Breast epithelium (tissue), 4 donors: ENCODE measurements at regions of chr16 and their contacts with region 1.

Region 1: DNA sequence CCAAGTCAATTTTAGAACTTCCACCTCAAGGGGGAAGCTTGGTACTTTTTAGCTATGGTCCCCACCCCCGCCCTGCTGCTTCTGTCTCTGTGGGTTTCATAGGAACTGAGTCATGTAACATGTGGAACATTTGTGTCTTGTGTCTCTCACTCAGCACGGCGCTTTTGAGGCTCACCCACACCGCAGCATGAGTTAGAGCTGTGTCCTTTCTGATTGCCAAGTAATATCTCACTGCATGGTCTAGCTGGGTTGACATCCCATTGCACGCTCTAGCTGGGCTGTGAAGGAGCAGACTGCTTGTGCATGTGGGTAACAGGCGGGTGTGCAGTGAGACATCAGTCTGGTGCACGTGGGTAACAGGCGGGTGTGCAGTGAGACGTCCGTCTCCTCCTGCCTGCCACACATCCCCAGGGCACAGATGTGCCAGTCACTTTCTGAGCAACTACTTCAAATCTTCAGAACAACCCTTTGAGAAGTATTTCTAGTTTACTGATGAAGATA is 26.4 kb upstream of the SLC7A5 start:
- DNase-seq: no peak
- H3K4me3 ChIP-seq: no peak overlapping the region
- H3K27ac ChIP-seq: no peak overlapping the region
- H3K4me1 ChIP-seq: no peaks in the 10 kb centered on the region
- H3K27me3 ChIP-seq: no peaks in the 10 kb centered on the region
- CTCF ChIP-seq: no peak
- POLR2A ChIP-seq: no peak

Region 2: GRCh38 chr16:86375364-86375763 is 1520.3 kb before region 1 on chr16:
- intact Hi-C with region 1: no loop called
- DNase-seq: no peak
- H3K4me3 ChIP-seq: no peak overlapping the region
- H3K27ac ChIP-seq: no peak overlapping the region
- H3K4me1 ChIP-seq: no peaks in the 10 kb centered on the region
- H3K27me3 ChIP-seq: peaks cover 0 to 39% of the 10 kb centered on the region in 2 donors
- CTCF ChIP-seq: no peak
- POLR2A ChIP-seq: no peak

Region 3: DNA sequence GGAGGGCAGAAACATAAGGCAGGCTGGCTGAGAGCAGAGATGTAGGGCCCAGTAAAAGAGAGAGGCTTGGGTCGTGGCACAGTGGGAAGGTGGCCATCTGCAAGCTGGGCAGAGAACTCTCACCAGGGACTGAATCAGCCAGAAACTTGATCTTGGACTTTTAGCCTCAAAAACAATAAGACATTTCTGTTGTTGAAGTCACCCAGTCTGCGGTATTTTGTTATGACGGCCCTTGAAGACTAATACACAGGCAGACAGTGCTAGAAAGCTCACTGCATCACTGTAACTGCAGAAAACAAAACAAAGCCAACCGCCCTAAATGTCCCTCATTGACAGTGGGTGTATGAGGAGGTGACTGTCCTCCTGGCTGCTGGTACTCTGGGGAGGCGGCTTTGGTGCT is 297.3 kb before region 1 on chr16:
- intact Hi-C with region 1: loop called (anchors 5 kb)
- DNase-seq: no peak
- H3K4me3 ChIP-seq: no peak overlapping the region
- H3K27ac ChIP-seq: no peak overlapping the region
- H3K4me1 ChIP-seq: peaks cover 0 to 4% of the 10 kb centered on the region in 2 donors
- H3K27me3 ChIP-seq: peaks cover 0 to 70% of the 10 kb centered on the region in 2 donors
- CTCF ChIP-seq: no peak
- POLR2A ChIP-seq: no peak

Region 4: GRCh38 chr16:87930456-87930855 is 34.8 kb after region 1 on chr16:
- intact Hi-C with region 1: no loop called
- DNase-seq: no peak
- H3K4me3 ChIP-seq: no peak overlapping the region
- H3K27ac ChIP-seq: no peak overlapping the region
- H3K4me1 ChIP-seq: no peaks in the 10 kb centered on the region
- H3K27me3 ChIP-seq: no peaks in the 10 kb centered on the region
- CTCF ChIP-seq: no peak
- POLR2A ChIP-seq: no peak

Region 5: GRCh38 chr16:88452482-88453216 is 557.0 kb after region 1 on chr16:
- intact Hi-C with region 1: no loop called
- DNase-seq: peak; percentile 95 to 97
- H3K4me3 ChIP-seq: peak overlapping the region; percentile 51 to 84 (median 65)
- H3K27ac ChIP-seq: peak overlapping the region; percentile 76 to 83
- H3K4me1 ChIP-seq: peaks cover 10 to 18% of the 10 kb centered on the region in 2 donors
- H3K27me3 ChIP-seq: no peaks in the 10 kb centered on the region
- CTCF ChIP-seq: no peak
- POLR2A ChIP-seq: no peak